Heart left ventricle (tissue), 16 donors: ENCODE measurements at regions of chr13 and their contacts with region 1.

Region 1: DNA sequence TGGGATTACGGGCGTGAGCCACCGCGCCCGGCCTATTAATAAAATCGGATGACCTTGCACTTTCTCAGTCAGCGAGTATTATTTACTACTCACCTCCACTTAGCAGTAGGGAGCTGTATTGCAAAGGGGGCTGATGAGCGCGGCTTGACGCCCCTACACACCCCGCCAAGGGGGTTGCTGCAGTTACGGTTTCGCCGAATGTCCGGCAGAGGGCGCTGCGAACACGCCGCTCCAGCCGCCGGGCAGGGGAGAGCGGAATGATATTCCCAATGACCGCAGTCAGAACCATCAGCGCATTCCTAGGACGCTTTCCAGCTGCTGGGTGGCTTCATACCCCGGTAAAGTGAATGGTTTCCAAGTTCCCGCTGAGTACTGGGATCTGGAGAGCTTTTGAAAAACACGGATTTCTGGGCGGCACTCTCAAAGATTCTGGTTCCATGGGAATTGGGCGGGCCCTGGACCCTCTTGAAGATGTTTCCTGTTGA is 30.0 kb upstream of the TPT1 start:
- DNase-seq: peak; percentile 70 to 82 (median 71)
- ATAC-seq: peak; percentile 83 to 91 (median 86)
- H3K4me3 ChIP-seq: peak overlapping the region in 7 of 12 donors; percentile 14 to 45 (median 21)
- H3K27ac ChIP-seq: peak overlapping the region in 6 of 12 donors; percentile 4 to 58 (median 43)
- H3K4me1 ChIP-seq: peaks cover 0 to 35% (median 21%) of the 10 kb centered on the region in 12 donors
- H3K27me3 ChIP-seq: no peaks in the 10 kb centered on the region
- CTCF ChIP-seq: peak; percentile 93 to 99 (median 96)
- POLR2A ChIP-seq: no peak

Region 2: GRCh38 chr13:45393941-45394570 is 23.1 kb after region 1 on chr13:
- intact Hi-C with region 1: loop called in 1 of 10 experiments (anchors 1 kb)
- DNase-seq: peak in 3 of 5 donors; percentile 43 to 53 (median 45)
- ATAC-seq: peak in 3 of 4 donors; percentile 43 to 61 (median 53)
- H3K4me3 ChIP-seq: no peak overlapping the region
- H3K27ac ChIP-seq: peak overlapping the region in 1 of 12 donors; percentile 2
- H3K4me1 ChIP-seq: peaks cover 0 to 39% (median 18%) of the 10 kb centered on the region in 12 donors
- H3K27me3 ChIP-seq: no peaks in the 10 kb centered on the region
- CTCF ChIP-seq: peak; percentile 25 to 69 (median 61)
- POLR2A ChIP-seq: no peak

Region 3: GRCh38 chr13:45434556-45435371 is 63.8 kb after region 1 on chr13:
- intact Hi-C with region 1: no loop called
- DNase-seq: no peak
- ATAC-seq: no peak
- H3K4me3 ChIP-seq: no peak overlapping the region
- H3K27ac ChIP-seq: peak overlapping the region in 4 of 12 donors; percentile 8 to 46 (median 42)
- H3K4me1 ChIP-seq: peaks cover 0 to 6% (median 0%) of the 10 kb centered on the region in 12 donors
- H3K27me3 ChIP-seq: no peaks in the 10 kb centered on the region
- CTCF ChIP-seq: no peak
- POLR2A ChIP-seq: no peak

Region 4: DNA sequence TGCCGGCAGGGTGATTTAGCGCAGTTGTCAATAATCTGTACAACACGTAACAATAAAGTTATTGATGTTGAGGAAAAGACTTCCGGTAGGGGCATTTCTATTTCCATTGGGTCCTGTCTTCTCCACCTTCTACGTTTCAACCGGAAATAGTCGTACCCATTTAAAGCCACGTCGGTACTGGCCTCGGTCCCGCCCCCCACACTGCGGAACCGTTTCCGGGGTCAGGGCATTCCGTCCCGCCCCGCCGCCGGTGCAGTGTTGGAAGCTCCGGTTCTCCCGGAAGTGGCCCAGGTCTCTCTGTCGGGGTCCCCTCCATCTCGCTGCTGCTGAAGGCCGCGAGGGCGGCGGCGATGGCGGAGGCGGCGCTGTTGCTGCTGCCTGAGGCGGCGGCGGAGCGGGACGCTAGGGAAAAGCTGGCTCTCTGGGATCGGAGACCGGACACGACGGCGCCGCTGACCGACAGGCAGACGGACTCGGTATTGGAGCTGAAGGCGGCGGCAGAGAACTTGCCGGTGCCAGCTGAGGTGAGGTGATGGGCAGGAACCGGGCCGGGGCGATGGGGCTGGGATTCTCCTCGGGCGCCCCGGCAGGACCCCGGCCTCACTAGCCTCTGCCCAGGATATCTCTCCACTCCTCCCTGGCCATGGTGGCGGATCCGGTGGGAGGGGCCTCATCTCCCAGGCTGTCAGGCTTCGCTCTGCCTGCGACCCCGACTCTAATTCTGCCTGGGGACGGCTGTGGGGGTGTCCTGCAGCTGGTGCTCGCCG is 93.9 kb after region 1 on chr13 and contains the start of gene COG3:
- intact Hi-C with region 1: loop called in 5 of 10 experiments (anchors 5 to 10 kb)
- DNase-seq: peak; percentile 94 to 96 (median 96)
- ATAC-seq: peak; percentile 98 to 99 (median 99)
- H3K4me3 ChIP-seq: peak within 1 kb of the TSS; percentile 76 to 94 (median 87)
- H3K27ac ChIP-seq: peak within 1 kb of the TSS; percentile 81 to 95 (median 94)
- H3K4me1 ChIP-seq: peaks cover 0 to 53% (median 34%) of the 10 kb centered on the region in 12 donors
- H3K27me3 ChIP-seq: no peaks in the 10 kb centered on the region
- CTCF ChIP-seq: peak in 5 of 12 donors; percentile 19 to 54 (median 44)
- POLR2A ChIP-seq: peak in 1 of 2 donors; percentile 57
- total RNA-seq, gene COG3: 12.6 to 23.1 (median 15.5) TPM

Region 5: GRCh38 chr13:45473627-45474026 is 102.7 kb after region 1 on chr13:
- intact Hi-C with region 1: loop called in 4 of 10 experiments (anchors 5 to 10 kb)
- DNase-seq: no peak
- ATAC-seq: no peak
- H3K4me3 ChIP-seq: no peak overlapping the region
- H3K27ac ChIP-seq: no peak overlapping the region
- H3K4me1 ChIP-seq: peaks cover 0 to 46% (median 15%) of the 10 kb centered on the region in 12 donors
- H3K27me3 ChIP-seq: no peaks in the 10 kb centered on the region
- CTCF ChIP-seq: peak in 1 of 12 donors; percentile 10
- POLR2A ChIP-seq: no peak

Region 6: DNA sequence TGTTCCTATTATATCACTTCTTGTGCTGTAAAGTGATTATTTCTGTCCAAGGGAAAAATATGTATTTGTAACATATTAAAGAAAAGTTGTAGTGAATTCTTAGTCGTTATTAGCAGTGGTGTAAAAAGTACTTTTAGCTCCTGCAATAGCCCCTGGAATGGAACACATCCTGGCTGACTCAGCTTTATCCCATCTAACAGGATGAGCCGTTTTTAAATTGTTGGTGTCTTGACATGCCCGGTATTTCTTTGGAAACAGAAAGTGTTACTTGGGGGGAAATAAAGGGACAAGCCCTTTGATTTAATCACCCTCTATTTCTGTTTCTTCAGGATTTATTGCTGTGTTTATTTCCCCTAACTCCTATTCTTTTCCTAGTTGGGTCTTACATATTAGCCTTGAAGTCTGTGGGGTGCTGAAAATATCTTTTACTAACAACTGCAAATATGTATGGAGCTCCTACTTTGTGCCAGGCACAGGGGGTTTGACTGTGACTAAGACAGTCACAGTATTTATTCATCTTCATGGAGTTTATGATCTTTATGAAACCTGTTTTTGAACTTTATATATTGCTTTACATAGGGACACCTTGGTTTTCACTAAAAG is 111.7 kb after region 1 on chr13:
- intact Hi-C with region 1: loop called in 5 of 10 experiments (anchors 2 to 10 kb)
- DNase-seq: no peak
- ATAC-seq: peak in 2 of 4 donors; percentile 52 to 63
- H3K4me3 ChIP-seq: no peak overlapping the region
- H3K27ac ChIP-seq: peak overlapping the region in 5 of 12 donors; percentile 2 to 42 (median 11)
- H3K4me1 ChIP-seq: peaks cover 0 to 24% (median 10%) of the 10 kb centered on the region in 12 donors
- H3K27me3 ChIP-seq: no peaks in the 10 kb centered on the region
- CTCF ChIP-seq: no peak
- POLR2A ChIP-seq: no peak

Region 7: GRCh38 chr13:45490068-45490467 is 119.1 kb after region 1 on chr13:
- intact Hi-C with region 1: loop called in 4 of 10 experiments (anchors 2 to 10 kb)
- DNase-seq: no peak
- ATAC-seq: peak in 1 of 4 donors; percentile 63
- H3K4me3 ChIP-seq: no peak overlapping the region
- H3K27ac ChIP-seq: no peak overlapping the region
- H3K4me1 ChIP-seq: no peaks in the 10 kb centered on the region
- H3K27me3 ChIP-seq: no peaks in the 10 kb centered on the region
- CTCF ChIP-seq: peak in 8 of 12 donors; percentile 11 to 40 (median 24)
- POLR2A ChIP-seq: no peak